ENCODE measurements at regions of chr1 and their contacts with region 1.

Region 1: DNA sequence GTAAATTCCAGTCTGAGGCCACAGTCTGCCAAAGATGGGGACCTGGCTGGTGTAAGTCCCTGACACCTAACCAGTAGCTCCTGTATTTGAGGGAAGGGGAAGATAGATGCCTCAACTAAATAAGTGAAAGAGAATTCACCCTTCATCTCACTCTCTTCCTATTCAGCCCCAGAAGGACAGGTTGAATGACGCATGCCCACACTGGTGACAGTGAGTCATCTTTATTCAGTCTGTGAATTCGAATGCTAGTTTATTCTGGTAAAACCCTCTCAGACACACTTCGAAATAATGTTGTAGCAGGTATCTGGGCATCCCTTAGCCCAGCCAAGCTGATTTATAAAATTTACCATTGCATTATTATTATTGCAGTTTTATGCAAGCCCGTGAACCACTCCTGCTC is 617.0 kb upstream of the PRMT6 start:
- DNase-seq: no peak
- H3K4me3 ChIP-seq: no peak overlapping the region
- H3K27ac ChIP-seq: no peak overlapping the region
- H3K4me1 ChIP-seq: no peaks in the 10 kb centered on the region
- H3K27me3 ChIP-seq: no peaks in the 10 kb centered on the region
- CTCF ChIP-seq: no peak

Region 2: GRCh38 chr1:105591681-105592080 is 847.8 kb before region 1 on chr1:
- CTCF ChIA-PET with region 1: no interaction called
- POLR2A ChIA-PET with region 1: interaction called, 17 read pairs
- intact Hi-C with region 1: no loop called
- DNase-seq: no peak
- H3K4me3 ChIP-seq: no peak overlapping the region
- H3K27ac ChIP-seq: no peak overlapping the region
- H3K4me1 ChIP-seq: no peaks in the 10 kb centered on the region
- H3K27me3 ChIP-seq: no peaks in the 10 kb centered on the region
- CTCF ChIP-seq: no peak